ENCODE measurements at regions of chrX and their contacts with region 1.

Region 1: DNA sequence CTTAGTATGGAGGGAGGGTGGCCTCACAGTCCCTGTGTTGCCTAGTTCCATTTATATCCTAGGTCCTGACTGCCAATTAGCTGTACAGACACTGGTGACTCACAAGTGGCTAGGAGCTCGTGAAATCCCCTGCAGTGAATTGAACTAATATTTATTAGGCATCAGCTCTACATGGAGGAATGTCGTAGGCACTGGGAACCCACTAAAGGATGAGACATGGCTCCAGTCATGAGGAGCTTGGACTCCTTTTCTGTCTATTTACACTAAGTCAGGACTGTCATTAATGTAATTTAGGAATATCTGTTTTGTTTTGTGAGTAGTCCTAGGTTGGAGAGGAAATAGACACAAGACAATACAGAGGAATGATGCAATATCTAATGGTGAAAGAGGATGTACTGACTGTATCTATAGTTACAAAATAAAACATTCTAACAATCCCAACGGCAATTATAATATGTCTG is 67.7 kb downstream of the MID1IP1 start:
- DNase-seq: peak in 1 of 2 donors; percentile 26
- H3K4me3 ChIP-seq: no peak overlapping the region
- CTCF ChIP-seq: no peak
- POLR2A ChIP-seq: no peak

Region 2: GRCh38 chrX:38347136-38347535 is 521.8 kb before region 1 on chrX:
- intact Hi-C with region 1: no loop called
- DNase-seq: no peak
- H3K4me3 ChIP-seq: no peak overlapping the region
- CTCF ChIP-seq: no peak
- POLR2A ChIP-seq: no peak

Region 3: GRCh38 chrX:38717871-38718270 is 151.1 kb before region 1 on chrX:
- intact Hi-C with region 1: no loop called
- DNase-seq: no peak
- H3K4me3 ChIP-seq: no peak overlapping the region
- CTCF ChIP-seq: no peak
- POLR2A ChIP-seq: no peak

Region 4: DNA sequence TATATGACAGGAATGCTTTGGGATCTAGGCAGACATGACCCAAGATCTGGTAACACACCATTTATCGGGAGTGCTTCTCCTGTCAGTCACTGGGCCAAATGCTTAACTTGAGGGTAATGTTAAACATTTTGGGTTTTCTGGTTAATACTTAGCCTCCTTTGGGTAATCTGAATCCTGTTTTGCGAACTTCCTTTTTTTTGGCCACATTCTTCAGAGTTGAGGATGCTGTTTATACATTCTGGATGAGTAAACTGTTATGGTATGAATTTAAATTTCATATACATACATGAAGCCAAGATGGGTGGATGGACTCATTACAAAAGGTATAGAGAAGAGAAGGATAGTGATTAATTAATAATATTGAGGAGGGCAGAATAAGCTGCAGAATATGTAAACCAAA is 31.6 kb before region 1 on chrX:
- intact Hi-C with region 1: loop called (anchors 2 kb)
- DNase-seq: no peak
- H3K4me3 ChIP-seq: no peak overlapping the region
- CTCF ChIP-seq: no peak
- POLR2A ChIP-seq: no peak